ENCODE measurements at regions of chr1 and their contacts with region 1.

Region 1: DNA sequence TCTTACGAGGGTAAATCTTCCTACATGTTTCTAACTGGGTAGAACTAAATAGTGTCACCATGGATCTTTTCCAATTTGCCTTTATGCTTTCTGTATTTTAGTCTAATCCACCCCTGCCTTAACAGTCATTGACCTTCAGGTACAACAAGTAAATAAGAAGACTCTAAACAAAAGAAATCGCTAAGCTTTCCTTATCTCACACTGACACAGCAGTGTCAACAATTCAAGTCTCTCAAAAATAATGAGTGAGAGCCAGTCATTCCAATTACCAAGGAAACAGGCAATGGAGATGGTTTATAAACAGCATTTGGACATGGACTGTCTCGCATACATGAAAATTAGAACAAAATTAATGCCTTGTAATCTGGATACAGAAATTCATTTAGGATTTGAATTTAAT is 365.8 kb downstream of the VAV3 start:
- DNase-seq: peak; percentile 18
- ATAC-seq: no peak
- H3K4me3 ChIP-seq: no peak overlapping the region
- H3K27ac ChIP-seq: peak overlapping the region; percentile 69
- H3K4me1 ChIP-seq: peaks cover 49% of the 10 kb centered on the region
- H3K27me3 ChIP-seq: no peaks in the 10 kb centered on the region
- CTCF ChIP-seq: no peak
- EP300 ChIP-seq: peak in 1 of 2 experiments; percentile 23; a peak in 1 of 4 replicates
- POLR2A ChIP-seq: no peak
- RAD21 ChIP-seq: no peak

Region 2: GRCh38 chr1:107430540-107431228 is 168.5 kb before region 1 on chr1:
- CTCF ChIA-PET with region 1: no interaction called
- POLR2A ChIA-PET with region 1: no interaction called
- in situ Hi-C with region 1: no loop called
- intact Hi-C with region 1: no loop called
- DNase-seq: peak; percentile 67
- ATAC-seq: peak; percentile 98
- H3K4me3 ChIP-seq: no peak overlapping the region; a peak in 1 of 6 replicates
- H3K27ac ChIP-seq: no peak overlapping the region
- H3K4me1 ChIP-seq: peaks cover 7% of the 10 kb centered on the region; the same call in 1 of the 2 replicates
- H3K27me3 ChIP-seq: no peaks in the 10 kb centered on the region
- CTCF ChIP-seq: peak; percentile 92
- EP300 ChIP-seq: no peak
- POLR2A ChIP-seq: no peak
- RAD21 ChIP-seq: peak; percentile 71

Region 3: DNA sequence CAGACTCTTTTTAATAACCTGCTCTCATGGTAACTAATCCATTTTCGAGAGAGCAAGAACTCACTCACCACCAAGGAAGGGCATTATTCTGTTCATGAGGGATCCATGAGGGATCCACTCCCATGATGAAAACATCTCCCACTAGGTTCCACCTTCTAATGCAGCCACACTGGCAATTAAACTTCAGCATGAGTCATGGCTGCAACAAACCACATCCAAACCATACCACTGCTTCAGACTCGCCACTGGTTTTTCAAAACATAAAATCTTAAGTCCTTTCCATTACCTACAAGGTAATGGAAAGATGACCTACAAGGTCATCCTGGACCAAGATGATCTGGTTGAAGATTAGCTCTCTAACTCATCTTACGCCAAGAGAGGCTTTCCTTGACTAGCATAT is 39.3 kb before region 1 on chr1:
- CTCF ChIA-PET with region 1: no interaction called
- POLR2A ChIA-PET with region 1: no interaction called
- in situ Hi-C with region 1: no loop called
- intact Hi-C with region 1: no loop called
- DNase-seq: no peak
- ATAC-seq: no peak
- H3K4me3 ChIP-seq: no peak overlapping the region
- H3K27ac ChIP-seq: no peak overlapping the region
- H3K4me1 ChIP-seq: no peaks in the 10 kb centered on the region
- H3K27me3 ChIP-seq: 0 out of 5 replicates have a peak, but pooled peaks cover 0 to 3% of the 10 kb centered on the region in 2 experiments
- CTCF ChIP-seq: no peak
- EP300 ChIP-seq: no peak
- POLR2A ChIP-seq: no peak
- RAD21 ChIP-seq: no peak

Region 4: GRCh38 chr1:107683191-107683657 is 84.0 kb after region 1 on chr1:
- CTCF ChIA-PET with region 1: no interaction called
- POLR2A ChIA-PET with region 1: interaction called, 4 read pairs
- in situ Hi-C with region 1: loop called (anchors 5 kb)
- intact Hi-C with region 1: loop called (anchors 2 kb)
- DNase-seq: peak; percentile 92
- ATAC-seq: peak; percentile 87
- H3K4me3 ChIP-seq: peak overlapping the region in 2 of 3 experiments; percentile 5 to 37; a peak in 2 of 6 replicates
- H3K27ac ChIP-seq: peak overlapping the region; percentile 93
- H3K4me1 ChIP-seq: peaks cover 67% of the 10 kb centered on the region
- H3K27me3 ChIP-seq: no peaks in the 10 kb centered on the region
- CTCF ChIP-seq: no peak
- EP300 ChIP-seq: peak in 1 of 2 experiments; percentile 83; a peak in 2 of 4 replicates
- POLR2A ChIP-seq: peak; percentile 62 to 70
- RAD21 ChIP-seq: no peak

Region 5: GRCh38 chr1:107688354-107688753 is 89.1 kb after region 1 on chr1:
- CTCF ChIA-PET with region 1: no interaction called
- POLR2A ChIA-PET with region 1: interaction called, 4 read pairs
- in situ Hi-C with region 1: loop called (anchors 5 kb)
- intact Hi-C with region 1: no loop called
- DNase-seq: peak; percentile 71
- ATAC-seq: peak; percentile 88
- H3K4me3 ChIP-seq: peak overlapping the region; percentile 62 to 67 (median 63); a peak in 5 of 6 replicates
- H3K27ac ChIP-seq: peak overlapping the region; percentile 69
- H3K4me1 ChIP-seq: peaks cover 56% of the 10 kb centered on the region
- H3K27me3 ChIP-seq: no peaks in the 10 kb centered on the region
- CTCF ChIP-seq: no peak
- EP300 ChIP-seq: 0 out of 4 replicates have a peak, but pooled peaks of 1 of the 2 experiments have one; percentile 18
- POLR2A ChIP-seq: peak in 1 of 2 experiments; percentile 76; a peak in 3 of 4 replicates
- RAD21 ChIP-seq: no peak